ENCODE measurements at regions of chr4 and their contacts with region 1.

Region 1: DNA sequence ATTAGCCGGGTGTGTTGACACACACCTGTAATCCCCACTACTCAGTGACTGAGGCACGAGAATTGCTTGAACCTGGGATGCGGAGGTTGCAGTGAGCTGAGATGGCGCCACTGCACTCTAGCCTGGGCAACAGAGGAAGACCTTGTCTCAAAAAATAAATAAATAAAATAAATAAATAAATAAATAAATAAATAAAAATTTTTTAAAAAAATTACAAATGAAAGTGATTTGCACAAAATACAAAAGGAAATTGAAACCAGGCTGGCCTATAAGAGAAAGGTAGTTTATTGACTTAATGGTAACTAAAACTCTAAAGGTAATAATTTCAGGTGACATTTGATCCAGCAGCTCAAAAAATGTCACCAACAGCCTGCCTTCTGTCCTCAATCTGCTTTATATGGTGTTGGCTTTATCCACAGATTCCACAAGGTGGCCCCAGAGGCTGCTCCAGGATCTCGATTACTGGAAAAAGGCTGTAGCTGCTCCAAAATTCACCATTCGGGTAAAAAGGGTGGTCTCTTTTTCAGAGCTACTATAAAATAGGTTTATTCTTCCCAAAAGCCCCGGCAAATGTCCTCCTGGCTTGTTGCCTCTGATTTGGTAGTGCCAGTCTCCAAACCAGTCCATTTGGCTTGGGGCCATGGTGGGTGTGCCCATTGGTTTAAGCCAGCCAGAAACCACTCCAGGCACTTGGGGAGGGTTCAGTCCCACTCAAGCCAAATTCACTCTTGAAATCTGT is 61.4 kb upstream of the TRIM2 start:
- DNase-seq: peak; percentile 48
- ATAC-seq: peak; percentile 89
- H3K4me3 ChIP-seq: peak overlapping the region in 1 of 2 experiments; percentile 19; a peak in 2 of 4 replicates
- H3K27ac ChIP-seq: peak overlapping the region; percentile 77
- H3K4me1 ChIP-seq: peaks cover 18% of the 10 kb centered on the region
- H3K27me3 ChIP-seq: no peaks in the 10 kb centered on the region
- CTCF ChIP-seq: peak; percentile 85

Region 2: GRCh38 chr4:153095448-153096204 is 47.2 kb before region 1 on chr4:
- CTCF ChIA-PET with region 1: no interaction called
- POLR2A ChIA-PET with region 1: no interaction called
- in situ Hi-C with region 1: no loop called
- intact Hi-C with region 1: no loop called
- DNase-seq: no peak
- ATAC-seq: no peak
- H3K4me3 ChIP-seq: no peak overlapping the region
- H3K27ac ChIP-seq: no peak overlapping the region
- H3K4me1 ChIP-seq: no peaks in the 10 kb centered on the region
- H3K27me3 ChIP-seq: no peaks in the 10 kb centered on the region
- CTCF ChIP-seq: no peak

Region 3: GRCh38 chr4:153318696-153319320 is 175.9 kb after region 1 on chr4:
- CTCF ChIA-PET with region 1: interaction called, 7 read pairs
- POLR2A ChIA-PET with region 1: no interaction called
- in situ Hi-C with region 1: no loop called
- intact Hi-C with region 1: loop called (anchors 2 kb)
- DNase-seq: no peak
- ATAC-seq: peak; percentile 91
- H3K4me3 ChIP-seq: no peak overlapping the region
- H3K27ac ChIP-seq: no peak overlapping the region
- H3K4me1 ChIP-seq: no peaks in the 10 kb centered on the region
- H3K27me3 ChIP-seq: no peaks in the 10 kb centered on the region
- CTCF ChIP-seq: peak; percentile 70; the same call in 1 of the 2 replicates

Region 4: GRCh38 chr4:153573881-153574802 is 431.3 kb after region 1 on chr4:
- CTCF ChIA-PET with region 1: interaction called, 6 read pairs
- POLR2A ChIA-PET with region 1: no interaction called
- in situ Hi-C with region 1: no loop called
- intact Hi-C with region 1: loop called (anchors 5 kb)
- DNase-seq: peak; percentile 25
- ATAC-seq: peak; percentile 88
- H3K4me3 ChIP-seq: no peak overlapping the region
- H3K27ac ChIP-seq: no peak overlapping the region
- H3K4me1 ChIP-seq: no peaks in the 10 kb centered on the region
- H3K27me3 ChIP-seq: no peaks in the 10 kb centered on the region
- CTCF ChIP-seq: peak; percentile 68

Region 5: DNA sequence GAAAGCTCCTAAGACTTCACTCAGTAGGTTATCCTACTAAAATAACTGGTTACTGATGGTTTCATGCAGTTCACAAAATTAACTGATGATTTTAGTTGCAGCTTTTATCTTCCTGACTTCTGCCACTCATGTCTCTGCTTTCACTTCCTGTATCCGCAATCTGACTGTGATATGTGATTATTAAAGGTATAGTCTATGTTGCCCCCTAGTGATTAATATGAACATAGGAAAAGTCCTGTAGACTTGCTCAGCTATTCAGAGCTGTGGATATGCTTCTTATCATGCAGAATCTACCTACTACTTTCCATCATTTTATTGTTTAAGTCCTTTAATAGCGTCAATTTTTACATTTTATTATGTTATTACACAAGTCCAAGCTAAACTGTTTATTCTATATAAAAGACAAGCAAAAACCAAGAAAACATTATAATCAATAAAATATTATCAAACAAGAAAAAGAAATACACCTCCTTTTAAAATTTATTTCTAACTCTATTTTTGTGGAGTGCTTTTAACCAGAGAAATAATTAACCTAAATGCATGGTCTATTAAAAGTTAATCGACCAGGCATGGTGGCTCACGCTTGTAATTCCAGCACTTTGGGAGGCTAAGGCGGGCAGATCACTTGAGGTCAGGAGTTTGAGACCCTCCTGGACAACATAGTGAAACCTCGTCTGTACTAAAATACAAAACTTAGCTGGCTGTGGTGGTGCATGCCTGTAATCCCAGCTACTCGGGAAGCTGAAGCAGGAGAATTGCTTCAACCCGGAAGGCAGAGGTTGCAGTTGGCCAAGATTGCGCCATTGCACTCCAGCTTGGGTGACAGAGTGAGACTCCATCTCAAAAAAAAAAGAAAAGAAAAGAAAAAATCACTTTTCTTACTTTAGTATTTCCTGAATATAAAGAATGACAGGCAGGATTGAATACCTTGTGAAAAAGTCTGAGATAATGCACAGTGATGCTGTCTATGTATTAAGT is 500.8 kb after region 1 on chr4:
- CTCF ChIA-PET with region 1: no interaction called
- POLR2A ChIA-PET with region 1: no interaction called
- in situ Hi-C with region 1: no loop called
- intact Hi-C with region 1: loop called (anchors 2 kb)
- DNase-seq: no peak
- ATAC-seq: peak; percentile 92
- H3K4me3 ChIP-seq: no peak overlapping the region
- H3K27ac ChIP-seq: no peak overlapping the region
- H3K4me1 ChIP-seq: no peaks in the 10 kb centered on the region
- H3K27me3 ChIP-seq: no peaks in the 10 kb centered on the region
- CTCF ChIP-seq: peak; percentile 49; the same call in 1 of the 2 replicates

Region 6: GRCh38 chr4:153750197-153750817 is 607.4 kb after region 1 on chr4:
- CTCF ChIA-PET with region 1: no interaction called
- POLR2A ChIA-PET with region 1: no interaction called
- in situ Hi-C with region 1: no loop called
- intact Hi-C with region 1: loop called (anchors 10 kb)
- DNase-seq: peak; percentile 47
- ATAC-seq: peak; percentile 90
- H3K4me3 ChIP-seq: no peak overlapping the region
- H3K27ac ChIP-seq: no peak overlapping the region
- H3K4me1 ChIP-seq: no peaks in the 10 kb centered on the region
- H3K27me3 ChIP-seq: no peaks in the 10 kb centered on the region
- CTCF ChIP-seq: peak; percentile 78

Measured in Panc1 (cell line).